ENCODE measurements at regions of chr15 and their contacts with region 1.

Region 1: DNA sequence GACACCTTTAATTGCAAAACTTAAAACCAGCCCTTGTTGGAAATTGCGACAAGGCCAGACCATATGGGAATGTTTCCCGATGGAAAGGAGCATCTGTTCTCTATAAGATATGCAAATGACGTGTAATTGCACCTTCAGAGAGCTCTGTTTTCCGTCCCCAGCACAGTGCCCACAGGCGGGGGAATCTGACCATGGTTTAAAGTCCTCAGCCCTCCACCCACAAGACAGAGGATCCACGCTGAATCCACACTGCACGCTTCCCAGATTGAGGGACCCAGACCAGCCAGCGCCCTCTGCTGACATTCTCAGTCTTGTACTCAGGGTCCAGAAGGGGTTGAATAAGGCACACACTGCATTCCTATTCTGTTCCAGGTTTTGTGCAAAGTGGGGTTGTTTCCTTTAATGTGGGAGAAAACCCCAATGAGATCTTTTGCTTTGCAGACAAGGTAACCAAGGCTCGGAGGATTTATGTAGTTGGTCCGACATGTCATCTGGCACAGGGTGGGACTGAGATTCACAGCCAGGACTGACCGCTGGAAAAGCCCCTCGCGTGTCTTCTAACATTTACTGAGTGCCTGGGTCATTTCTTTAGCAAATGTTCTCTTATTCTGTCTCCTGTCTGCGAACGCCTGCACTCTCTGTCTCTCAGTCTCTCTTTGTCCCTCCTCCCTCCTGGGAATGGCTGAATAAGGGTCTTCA is 36.8 kb upstream of the KLHL25 start:
- DNase-seq: peak; percentile 69 to 72
- H3K4me3 ChIP-seq: no peak overlapping the region
- H3K27ac ChIP-seq: no peak overlapping the region
- H3K4me1 ChIP-seq: no peaks in the 10 kb centered on the region
- H3K27me3 ChIP-seq: no peaks in the 10 kb centered on the region
- CTCF ChIP-seq: peak in 5 of 6 experiments; percentile 42 to 62 (median 60)
- POLR2A ChIP-seq: no peak

Region 2: GRCh38 chr15:85504749-85505676 is 326.6 kb before region 1 on chr15:
- intact Hi-C with region 1: no loop called
- DNase-seq: peak; percentile 49
- H3K4me3 ChIP-seq: no peak overlapping the region
- H3K27ac ChIP-seq: peak overlapping the region; percentile 3 to 75 (median 72)
- H3K4me1 ChIP-seq: peaks cover 19 to 34% of the 10 kb centered on the region in 2 donors
- H3K27me3 ChIP-seq: no peaks in the 10 kb centered on the region
- CTCF ChIP-seq: peak; percentile 21 to 65 (median 56)
- POLR2A ChIP-seq: no peak

Region 3: GRCh38 chr15:85730001-85730820 is 101.4 kb before region 1 on chr15:
- intact Hi-C with region 1: loop called (anchors 5 kb)
- DNase-seq: peak in 1 of 2 donors; percentile 30
- H3K4me3 ChIP-seq: no peak overlapping the region
- H3K27ac ChIP-seq: peak overlapping the region in 2 of 3 donors; percentile 84 to 86
- H3K4me1 ChIP-seq: peaks cover 11 to 23% of the 10 kb centered on the region in 2 donors
- H3K27me3 ChIP-seq: no peaks in the 10 kb centered on the region
- CTCF ChIP-seq: peak; percentile 33 to 93 (median 78)
- POLR2A ChIP-seq: no peak

Region 4: DNA sequence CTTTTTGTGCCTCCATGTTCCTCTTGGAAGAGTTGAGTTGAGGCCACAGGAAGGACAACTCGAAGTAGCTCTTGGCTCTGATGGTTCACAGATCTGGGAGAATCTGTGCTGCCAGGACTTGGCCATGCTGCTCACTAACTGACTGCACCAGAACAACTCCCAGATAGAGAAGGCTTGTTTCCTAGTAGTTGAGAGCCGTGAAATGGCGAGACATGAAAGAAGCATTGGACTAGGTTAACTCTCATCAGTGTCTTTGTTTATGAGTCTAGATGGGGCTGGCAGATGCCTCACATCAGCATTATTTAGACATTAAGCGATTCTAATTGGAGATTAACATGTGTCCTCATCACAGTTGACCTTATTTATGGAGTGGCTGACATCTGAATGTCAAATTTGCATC is 155.2 kb after region 1 on chr15:
- intact Hi-C with region 1: no loop called
- DNase-seq: no peak
- H3K4me3 ChIP-seq: no peak overlapping the region
- H3K27ac ChIP-seq: no peak overlapping the region
- H3K4me1 ChIP-seq: no peaks in the 10 kb centered on the region
- H3K27me3 ChIP-seq: no peaks in the 10 kb centered on the region
- CTCF ChIP-seq: no peak
- POLR2A ChIP-seq: no peak